ENCODE measurements at regions of chr5 and their contacts with region 1.

Region 1: DNA sequence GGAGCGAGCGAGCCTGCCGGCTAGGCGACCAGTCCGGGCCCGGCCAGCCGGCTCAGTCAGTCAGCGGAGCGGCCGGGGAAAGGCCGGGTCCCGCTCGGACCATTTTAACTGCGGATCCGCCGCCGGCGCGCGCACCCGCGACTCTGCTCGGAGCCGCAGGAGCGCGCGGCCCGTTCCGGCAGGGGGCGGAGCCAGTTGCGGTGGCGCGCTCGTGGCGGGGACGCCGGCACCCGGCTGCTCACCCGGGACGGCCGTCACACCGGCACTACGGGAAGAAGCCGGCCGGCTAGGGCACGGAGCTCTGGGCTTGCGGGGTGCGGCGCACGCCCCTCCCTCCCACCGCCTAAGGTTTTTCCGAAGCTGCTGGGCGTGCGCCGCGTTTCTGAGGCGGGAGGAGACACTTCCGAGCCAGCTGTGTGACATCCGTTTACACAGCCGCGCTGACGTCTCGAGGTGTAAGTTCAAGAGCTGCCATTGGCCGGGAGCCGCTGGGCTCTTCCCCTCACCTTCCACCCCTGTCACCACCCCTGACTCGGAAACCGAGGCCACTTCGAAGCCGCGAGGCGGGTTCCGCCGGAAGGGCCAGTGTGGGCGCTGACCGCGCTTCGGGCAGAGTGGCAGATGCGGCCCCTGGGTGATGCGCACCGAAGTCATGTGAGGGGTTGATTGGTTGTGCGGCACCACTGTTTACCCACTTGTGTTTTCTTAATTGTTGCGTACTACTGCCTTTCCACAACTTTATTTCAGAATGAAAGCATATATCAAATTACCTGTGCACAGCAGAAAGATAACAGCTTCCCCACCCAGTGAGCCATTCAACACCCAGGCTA is at the start of gene FBXL17:
- DNase-seq: peak; percentile 88
- ATAC-seq: peak; percentile 71
- H3K4me3 Mint-ChIP-seq: peak within 1 kb of the TSS; percentile 96
- H3K27ac Mint-ChIP-seq: peak within 1 kb of the TSS; percentile 98
- H3K4me1 Mint-ChIP-seq: peaks cover 47% of the 10 kb centered on the region
- H3K27me3 Mint-ChIP-seq: no peaks in the 10 kb centered on the region
- CTCF ChIP-seq: no peak
- total RNA-seq, gene FBXL17: 25.8 and 26.9 TPM in 2 replicates

Region 2: GRCh38 chr5:108303086-108303485 is 79.1 kb before region 1 on chr5:
- CTCF ChIA-PET with region 1: no interaction called
- POLR2A ChIA-PET with region 1: no interaction called
- intact Hi-C with region 1: loop called (anchors 5 kb)
- DNase-seq: no peak
- ATAC-seq: no peak
- H3K4me3 Mint-ChIP-seq: no peak overlapping the region
- H3K27ac Mint-ChIP-seq: no peak overlapping the region
- H3K4me1 Mint-ChIP-seq: peaks cover 3% of the 10 kb centered on the region
- H3K27me3 Mint-ChIP-seq: no peaks in the 10 kb centered on the region
- CTCF ChIP-seq: no peak

Region 3: GRCh38 chr5:108367679-108368334 is 14.4 kb before region 1 on chr5:
- CTCF ChIA-PET with region 1: no interaction called
- POLR2A ChIA-PET with region 1: interaction called, 8 read pairs
- intact Hi-C with region 1: loop called (anchors 2 kb)
- DNase-seq: no peak
- ATAC-seq: no peak
- H3K4me3 Mint-ChIP-seq: no peak overlapping the region
- H3K27ac Mint-ChIP-seq: no peak overlapping the region
- H3K4me1 Mint-ChIP-seq: peaks cover 11% of the 10 kb centered on the region
- H3K27me3 Mint-ChIP-seq: no peaks in the 10 kb centered on the region
- CTCF ChIP-seq: no peak

Region 4: GRCh38 chr5:108748401-108749127 is 366.4 kb after region 1 on chr5:
- CTCF ChIA-PET with region 1: no interaction called
- POLR2A ChIA-PET with region 1: interaction called, 3 read pairs
- intact Hi-C with region 1: loop called (anchors 1 kb)
- DNase-seq: peak; percentile 92
- ATAC-seq: peak; percentile 92
- H3K4me3 Mint-ChIP-seq: peak overlapping the region; percentile 92
- H3K27ac Mint-ChIP-seq: peak overlapping the region; percentile 94
- H3K4me1 Mint-ChIP-seq: peaks cover 22% of the 10 kb centered on the region
- H3K27me3 Mint-ChIP-seq: no peaks in the 10 kb centered on the region
- CTCF ChIP-seq: no peak

Region 5: GRCh38 chr5:109409844-109410388 is 1027.7 kb after region 1 on chr5 and contains the start of gene PJA2:
- CTCF ChIA-PET with region 1: no interaction called
- POLR2A ChIA-PET with region 1: interaction called, 58 read pairs
- intact Hi-C with region 1: loop called (anchors 1 kb)
- DNase-seq: peak; percentile 96
- ATAC-seq: peak; percentile 86
- H3K4me3 Mint-ChIP-seq: peak within 1 kb of the TSS; percentile 99
- H3K27ac Mint-ChIP-seq: peak within 1 kb of the TSS; percentile 94
- H3K4me1 Mint-ChIP-seq: peaks cover 49% of the 10 kb centered on the region
- H3K27me3 Mint-ChIP-seq: no peaks in the 10 kb centered on the region
- CTCF ChIP-seq: no peak
- total RNA-seq, gene PJA2: 55.3 and 58.0 TPM in 2 replicates